ENCODE measurements at regions of chr22 and their contacts with region 1.

Region 1: DNA sequence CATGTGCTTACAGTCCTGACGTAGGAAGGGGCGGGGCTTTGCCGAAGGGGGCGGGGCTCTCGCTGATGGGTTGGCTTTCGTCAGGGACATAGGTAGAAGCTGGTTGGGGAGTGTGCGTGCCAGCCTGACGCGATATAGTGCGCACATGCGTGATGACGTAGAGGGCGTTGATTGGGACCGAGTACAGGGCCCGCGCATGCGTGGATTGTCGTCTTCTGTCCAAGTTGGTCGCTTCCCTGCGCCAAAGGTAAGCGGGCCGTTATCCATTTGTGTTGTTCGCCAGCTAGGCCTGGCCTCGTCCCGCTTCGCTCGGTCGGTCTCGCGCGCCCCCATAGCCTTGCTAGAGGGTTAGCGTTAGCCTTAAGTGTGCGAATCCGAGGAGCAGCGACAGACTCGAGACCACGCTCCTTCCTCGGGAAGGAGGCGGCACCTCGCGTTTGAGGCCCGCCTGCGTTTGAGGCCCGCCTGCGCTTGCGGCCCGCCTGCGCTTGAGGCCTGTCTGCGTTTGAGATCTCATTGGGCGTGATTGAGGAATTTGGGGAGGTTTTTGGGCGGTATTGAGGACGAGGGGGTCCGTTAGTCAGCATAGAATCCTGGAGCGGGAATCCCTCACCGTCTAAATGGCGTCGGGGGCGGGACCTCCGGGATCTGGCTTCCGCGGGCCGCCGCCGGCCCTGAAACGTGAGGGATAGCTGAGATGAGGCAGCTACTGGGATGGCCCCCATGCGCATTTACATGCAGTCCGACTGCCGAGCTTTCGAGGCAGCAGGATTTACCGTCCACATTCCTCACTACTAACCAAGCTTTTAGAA is at the start of gene XRCC6:
- DNase-seq: peak; percentile 100
- ATAC-seq: peak; percentile 92
- H3K4me3 Mint-ChIP-seq: peak within 1 kb of the TSS; percentile 96
- H3K27ac Mint-ChIP-seq: peak within 1 kb of the TSS; percentile 98
- H3K4me1 Mint-ChIP-seq: peaks cover 46% of the 10 kb centered on the region
- H3K27me3 Mint-ChIP-seq: no peaks in the 10 kb centered on the region
- total RNA-seq, gene XRCC6: 302 to 308 TPM

Region 2: DNA sequence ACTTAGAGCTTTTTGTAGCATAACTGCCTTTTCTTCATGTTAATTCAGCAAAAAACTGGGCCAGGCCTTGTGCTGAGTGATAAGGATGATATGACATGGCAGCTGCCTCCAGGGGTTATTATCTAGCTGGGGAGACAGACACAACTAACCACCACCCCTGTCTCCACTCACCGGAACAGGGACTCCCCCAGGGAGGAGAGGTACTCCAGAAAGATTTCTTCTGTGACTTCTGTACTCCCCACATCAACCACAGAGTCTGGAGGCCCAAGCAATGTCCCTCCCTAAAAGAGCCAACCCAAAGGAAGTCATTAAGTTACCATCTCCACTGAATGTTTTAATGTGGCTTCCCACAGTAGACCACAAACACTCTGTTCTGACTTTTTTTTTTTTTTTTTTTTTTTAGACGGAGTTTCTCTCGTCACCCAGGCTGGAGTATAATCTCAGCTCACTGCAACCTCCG is 17.4 kb before region 1 on chr22:
- CTCF ChIA-PET with region 1: interaction called, 4 read pairs
- POLR2A ChIA-PET with region 1: interaction called, 31 read pairs
- DNase-seq: peak; percentile 79
- ATAC-seq: peak; percentile 98
- H3K4me3 Mint-ChIP-seq: peak overlapping the region; percentile 40
- H3K27ac Mint-ChIP-seq: peak overlapping the region; percentile 67
- H3K4me1 Mint-ChIP-seq: peaks cover 29% of the 10 kb centered on the region
- H3K27me3 Mint-ChIP-seq: peaks cover 8% of the 10 kb centered on the region